ENCODE measurements at regions of chr1 and their contacts with region 1.

Region 1: GRCh38 chr1:167803358-167804207 is 81.8 kb downstream of the MPZL1 start:
- H3K4me3 Mint-ChIP-seq: peak overlapping the region; percentile 55
- H3K27ac Mint-ChIP-seq: peak overlapping the region; percentile 9
- H3K4me1 Mint-ChIP-seq: peaks cover 22% of the 10 kb centered on the region
- H3K27me3 Mint-ChIP-seq: no peaks in the 10 kb centered on the region

Region 2: GRCh38 chr1:167439301-167439988 is 364.1 kb before region 1 on chr1:
- intact Hi-C with region 1: no loop called
- H3K4me3 Mint-ChIP-seq: peak overlapping the region; percentile 57
- H3K27ac Mint-ChIP-seq: no peak overlapping the region
- H3K4me1 Mint-ChIP-seq: peaks cover 24% of the 10 kb centered on the region
- H3K27me3 Mint-ChIP-seq: peaks cover 32% of the 10 kb centered on the region

Region 3: DNA sequence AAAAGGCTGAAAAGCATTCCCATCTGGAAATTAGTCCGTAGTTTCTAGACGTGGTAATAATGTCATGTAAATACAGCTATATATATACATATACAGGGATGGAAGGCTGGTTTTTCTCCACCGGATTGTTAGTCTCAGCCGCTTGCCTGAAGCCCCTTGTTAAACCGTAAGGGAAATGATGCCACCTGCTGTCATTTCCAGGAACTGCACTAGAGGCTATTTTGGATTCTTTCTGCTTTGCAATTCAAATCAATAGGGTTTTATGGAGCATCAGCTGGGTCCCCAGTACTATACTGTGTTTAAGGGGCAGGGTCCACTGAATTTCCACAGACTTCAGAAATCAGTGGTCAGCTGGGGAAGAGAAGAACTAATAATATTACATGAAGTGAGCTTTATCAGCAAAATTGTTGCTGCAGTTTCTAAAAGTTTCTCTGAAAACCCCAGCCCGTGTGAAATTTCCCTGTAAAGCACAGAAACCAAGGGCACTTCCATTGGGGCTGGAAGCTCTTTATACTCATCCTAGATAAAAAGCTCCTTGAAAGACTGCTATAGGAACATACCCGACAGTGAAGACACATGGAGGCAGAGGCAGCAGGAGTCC is 115.6 kb before region 1 on chr1:
- intact Hi-C with region 1: no loop called
- H3K4me3 Mint-ChIP-seq: no peak overlapping the region
- H3K27ac Mint-ChIP-seq: no peak overlapping the region
- H3K4me1 Mint-ChIP-seq: peaks cover 25% of the 10 kb centered on the region
- H3K27me3 Mint-ChIP-seq: no peaks in the 10 kb centered on the region

Region 4: GRCh38 chr1:167721617-167722151 is 81.9 kb before region 1 on chr1 and contains the start of gene MPZL1:
- intact Hi-C with region 1: loop called (anchors 1 kb)
- H3K4me3 Mint-ChIP-seq: peak within 1 kb of the TSS; percentile 84
- H3K27ac Mint-ChIP-seq: peak within 1 kb of the TSS; percentile 93
- H3K4me1 Mint-ChIP-seq: peaks cover 63% of the 10 kb centered on the region
- H3K27me3 Mint-ChIP-seq: peaks cover 5% of the 10 kb centered on the region